Right cardiac atrium (tissue), 5 donors: ENCODE measurements at regions of chr6 and their contacts with region 1.

Region 1: DNA sequence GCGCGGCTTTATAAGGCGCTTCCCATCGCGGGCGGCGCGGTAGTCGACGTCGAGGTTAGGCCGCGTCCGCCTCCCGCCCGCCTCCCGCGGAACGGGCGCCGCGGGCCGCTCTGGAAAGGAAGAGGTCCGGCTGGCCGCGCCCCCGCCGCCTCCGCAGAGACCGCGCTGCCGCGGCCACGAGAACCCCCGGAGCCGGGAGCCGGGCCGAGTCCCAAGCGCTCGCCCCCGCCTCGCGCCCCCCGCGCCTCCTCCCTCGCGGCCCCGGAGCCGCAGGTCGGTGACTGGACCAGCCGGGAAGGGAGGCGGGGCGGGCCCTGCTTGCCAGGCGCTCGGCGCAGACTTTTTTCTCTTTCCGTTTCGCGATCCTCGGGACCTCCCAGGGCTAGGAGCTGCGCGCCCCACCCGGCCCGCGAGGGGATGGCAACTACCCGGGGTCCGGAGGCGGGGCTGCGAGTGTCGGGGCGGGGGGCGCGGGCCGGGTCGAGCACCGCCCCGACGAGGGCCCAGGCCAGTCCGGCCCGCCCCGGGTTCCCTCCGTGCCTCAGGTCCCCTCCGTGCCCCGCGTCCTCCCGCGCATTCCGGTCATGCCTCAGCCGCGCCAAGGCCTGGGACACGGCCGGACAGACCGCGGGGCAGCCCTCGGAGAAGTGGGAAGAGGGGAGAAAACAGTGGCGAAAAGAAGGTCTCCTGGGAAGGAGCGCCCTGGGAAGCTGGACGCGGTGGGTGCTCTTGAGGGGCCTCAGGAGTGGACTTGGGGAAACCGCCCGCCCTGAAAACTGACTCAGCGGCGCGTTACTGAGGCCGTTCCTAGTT is 423 bp upstream of the PXDC1 start:
- DNase-seq: peak; percentile 93 to 96 (median 96)
- ATAC-seq: peak; percentile 81 to 85
- H3K4me3 ChIP-seq: peak overlapping the region; percentile 51
- H3K27ac ChIP-seq: peak overlapping the region; percentile 86
- H3K4me1 ChIP-seq: peaks cover 3% of the 10 kb centered on the region
- H3K27me3 ChIP-seq: no peaks in the 10 kb centered on the region

Region 2: GRCh38 chr6:3732345-3733141 is 19.4 kb before region 1 on chr6:
- intact Hi-C with region 1: no loop called
- DNase-seq: peak; percentile 77 to 87 (median 87)
- ATAC-seq: peak; percentile 78 to 82
- H3K4me3 ChIP-seq: no peak overlapping the region
- H3K27ac ChIP-seq: no peak overlapping the region
- H3K4me1 ChIP-seq: no peaks in the 10 kb centered on the region
- H3K27me3 ChIP-seq: no peaks in the 10 kb centered on the region

Region 3: GRCh38 chr6:3808759-3809514 is 57.0 kb after region 1 on chr6:
- intact Hi-C with region 1: loop called in 1 of 4 experiments (anchors 10 kb)
- DNase-seq: peak; percentile 71 to 83 (median 72)
- ATAC-seq: peak; percentile 76 to 83
- H3K4me3 ChIP-seq: no peak overlapping the region
- H3K27ac ChIP-seq: peak overlapping the region; percentile 56
- H3K4me1 ChIP-seq: peaks cover 16% of the 10 kb centered on the region
- H3K27me3 ChIP-seq: no peaks in the 10 kb centered on the region

Region 4: GRCh38 chr6:4250645-4251044 is 498.7 kb after region 1 on chr6:
- intact Hi-C with region 1: no loop called
- DNase-seq: no peak
- ATAC-seq: no peak
- H3K4me3 ChIP-seq: no peak overlapping the region
- H3K27ac ChIP-seq: no peak overlapping the region
- H3K4me1 ChIP-seq: peaks cover 3% of the 10 kb centered on the region
- H3K27me3 ChIP-seq: no peaks in the 10 kb centered on the region